Posterior vena cava (tissue), 2 donors: ENCODE measurements at regions of chr14 and their contacts with region 1.

Region 1: GRCh38 chr14:29216268-29217232 is 450.0 kb downstream of the FOXG1 start:
- DNase-seq: no peak

Region 2: DNA sequence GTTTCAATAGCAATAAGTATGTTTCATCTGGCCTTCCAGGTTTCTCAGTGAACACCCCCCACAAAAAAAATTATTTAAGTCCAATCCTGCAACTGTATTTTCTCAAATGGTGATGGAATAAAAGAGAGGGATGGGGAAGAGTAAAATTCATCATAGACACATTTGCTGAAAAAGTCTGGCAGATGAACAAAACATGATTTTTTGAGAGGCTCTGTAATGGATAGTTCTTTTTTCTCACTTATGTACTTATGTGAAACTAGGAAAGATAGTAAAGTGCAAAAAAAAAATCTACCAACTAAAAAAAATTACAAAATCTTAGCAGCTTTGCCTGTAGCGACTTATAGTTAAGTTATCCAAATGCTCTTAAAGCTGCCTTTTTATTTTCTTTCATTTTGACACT is 37.6 kb before region 1 on chr14:
- intact Hi-C with region 1: loop called in 1 of 2 experiments (anchors 2 kb)
- DNase-seq: no peak